Heart left ventricle (tissue), 16 donors: ENCODE measurements at regions of chr3 and their contacts with region 1.

Region 1: GRCh38 chr3:188853856-188854771 is 317.7 kb upstream of the TPRG1 start:
- DNase-seq: no peak
- ATAC-seq: peak; percentile 40 to 70 (median 50)
- H3K4me3 ChIP-seq: no peak overlapping the region
- H3K27ac ChIP-seq: peak overlapping the region in 9 of 12 donors; percentile 0 to 58 (median 35)
- H3K4me1 ChIP-seq: peaks cover 0 to 32% (median 16%) of the 10 kb centered on the region in 12 donors
- H3K27me3 ChIP-seq: no peaks in the 10 kb centered on the region
- CTCF ChIP-seq: no peak
- POLR2A ChIP-seq: no peak

Region 2: DNA sequence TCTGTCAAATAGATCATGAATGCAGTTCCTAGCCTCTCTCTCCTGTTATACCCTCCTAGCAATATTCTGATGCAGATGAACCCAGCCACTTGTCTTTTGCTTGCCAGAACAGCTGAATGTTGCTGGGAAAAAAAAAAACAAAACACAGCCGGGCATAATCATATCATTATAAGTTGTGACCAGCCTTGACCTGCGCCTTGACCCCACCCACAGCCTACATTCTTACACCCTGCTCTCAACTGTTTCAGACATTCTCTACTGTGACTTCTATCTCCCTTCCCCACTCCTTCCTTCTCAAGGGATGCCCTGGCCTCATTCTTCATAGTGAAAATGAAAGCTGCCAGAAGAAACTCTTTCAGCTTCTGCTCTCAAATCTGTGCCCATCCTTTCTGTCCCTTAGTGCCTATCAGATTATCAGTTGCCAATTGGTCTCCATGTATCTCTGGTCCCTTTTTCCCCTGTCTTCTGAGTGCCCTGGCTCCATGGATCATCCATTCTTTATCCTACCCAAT is 71.4 kb before region 1 on chr3:
- intact Hi-C with region 1: loop called in 1 of 10 experiments (anchors 2 kb)
- DNase-seq: no peak
- ATAC-seq: no peak
- H3K4me3 ChIP-seq: no peak overlapping the region
- H3K27ac ChIP-seq: peak overlapping the region in 2 of 12 donors; percentile 25 to 33
- H3K4me1 ChIP-seq: peaks cover 5 to 53% (median 15%) of the 10 kb centered on the region in 12 donors
- H3K27me3 ChIP-seq: no peaks in the 10 kb centered on the region
- CTCF ChIP-seq: no peak
- POLR2A ChIP-seq: no peak